ENCODE measurements at regions of chr6 and their contacts with region 1.

Region 1: GRCh38 chr6:12138381-12138780 is 126.3 kb downstream of the HIVEP1 start:
- DNase-seq: peak in 7 of 9 donors; percentile 54 to 80 (median 75)
- ATAC-seq: peak; percentile 99
- H3K4me3 ChIP-seq: no peak overlapping the region
- H3K4me3 Mint-ChIP-seq: peak overlapping the region in 9 of 10 donors; percentile 2 to 79 (median 51)
- H3K27ac ChIP-seq: no peak overlapping the region
- H3K27ac Mint-ChIP-seq: peak overlapping the region; percentile 12 to 90 (median 79)
- H3K4me1 ChIP-seq: peaks cover 4 to 19% of the 10 kb centered on the region in 2 donors
- H3K4me1 Mint-ChIP-seq: peaks cover 19 to 44% (median 35%) of the 10 kb centered on the region in 7 donors
- H3K27me3 ChIP-seq: no peaks in the 10 kb centered on the region
- H3K27me3 Mint-ChIP-seq: no peaks in the 10 kb centered on the region

Region 2: GRCh38 chr6:12126051-12126450 is 12.3 kb before region 1 on chr6:
- CTCF ChIA-PET with region 1: no interaction called
- POLR2A ChIA-PET with region 1: interaction called, 5 read pairs
- intact Hi-C with region 1: loop called (anchors 1 kb)
- DNase-seq: peak in 5 of 9 donors; percentile 42 to 62 (median 52)
- ATAC-seq: peak; percentile 75
- H3K4me3 ChIP-seq: no peak overlapping the region
- H3K4me3 Mint-ChIP-seq: peak overlapping the region in 9 of 10 donors; percentile 44 to 76 (median 63)
- H3K27ac ChIP-seq: no peak overlapping the region
- H3K27ac Mint-ChIP-seq: peak overlapping the region; percentile 16 to 88 (median 70)
- H3K4me1 ChIP-seq: peaks cover 0 to 35% of the 10 kb centered on the region in 2 donors
- H3K4me1 Mint-ChIP-seq: peaks cover 38 to 71% (median 62%) of the 10 kb centered on the region in 7 donors
- H3K27me3 ChIP-seq: no peaks in the 10 kb centered on the region
- H3K27me3 Mint-ChIP-seq: no peaks in the 10 kb centered on the region

Region 3: GRCh38 chr6:12228447-12229146 is 90.2 kb after region 1 on chr6:
- CTCF ChIA-PET with region 1: no interaction called
- POLR2A ChIA-PET with region 1: no interaction called
- intact Hi-C with region 1: no loop called
- DNase-seq: no peak
- ATAC-seq: no peak
- H3K4me3 ChIP-seq: no peak overlapping the region
- H3K4me3 Mint-ChIP-seq: no peak overlapping the region
- H3K27ac ChIP-seq: no peak overlapping the region
- H3K27ac Mint-ChIP-seq: no peak overlapping the region
- H3K4me1 ChIP-seq: peaks cover 10 to 14% of the 10 kb centered on the region in 2 donors
- H3K4me1 Mint-ChIP-seq: peaks cover 10 to 19% (median 15%) of the 10 kb centered on the region in 7 donors
- H3K27me3 ChIP-seq: no peaks in the 10 kb centered on the region
- H3K27me3 Mint-ChIP-seq: peaks cover 0 to 7% (median 0%) of the 10 kb centered on the region in 5 donors

Region 4: DNA sequence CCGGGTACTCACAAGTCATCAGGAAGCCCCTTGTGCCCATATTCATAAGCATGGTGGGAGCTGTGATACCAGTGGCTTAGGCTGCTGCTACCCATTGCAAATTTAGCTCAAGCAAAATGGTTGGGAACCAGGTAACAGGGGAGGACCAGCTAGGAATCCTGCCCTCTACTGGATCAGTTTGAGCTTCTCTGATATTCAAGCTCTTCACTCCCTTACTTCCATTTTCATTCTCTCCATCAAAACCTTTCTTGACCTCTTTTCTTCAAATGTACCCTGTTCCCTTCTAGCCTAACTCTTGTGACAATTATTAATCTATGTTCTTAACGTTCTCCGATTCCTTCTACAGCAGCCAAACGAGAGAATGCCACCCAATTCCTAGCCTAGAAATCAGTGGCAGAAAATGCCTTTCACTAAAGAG is 1486.5 kb after region 1 on chr6:
- CTCF ChIA-PET with region 1: no interaction called
- POLR2A ChIA-PET with region 1: no interaction called
- intact Hi-C with region 1: no loop called
- DNase-seq: peak in 6 of 9 donors; percentile 14 to 50 (median 40)
- ATAC-seq: peak; percentile 88
- H3K4me3 ChIP-seq: no peak overlapping the region
- H3K4me3 Mint-ChIP-seq: no peak overlapping the region
- H3K27ac ChIP-seq: no peak overlapping the region
- H3K27ac Mint-ChIP-seq: peak overlapping the region in 8 of 9 donors; percentile 23 to 88 (median 58)
- H3K4me1 ChIP-seq: no peaks in the 10 kb centered on the region
- H3K4me1 Mint-ChIP-seq: peaks cover 0 to 27% (median 12%) of the 10 kb centered on the region in 7 donors
- H3K27me3 ChIP-seq: no peaks in the 10 kb centered on the region
- H3K27me3 Mint-ChIP-seq: no peaks in the 10 kb centered on the region

Measured in naive thymus-derived CD4-positive, alpha-beta T cell (primary cell).